Activated naive CD4-positive, alpha-beta T cell treated with anti-CD3 and anti-CD28 coated beads for 36 hours (primary cell): ENCODE measurements at regions of chr17 and their contacts with region 1.

Region 1: DNA sequence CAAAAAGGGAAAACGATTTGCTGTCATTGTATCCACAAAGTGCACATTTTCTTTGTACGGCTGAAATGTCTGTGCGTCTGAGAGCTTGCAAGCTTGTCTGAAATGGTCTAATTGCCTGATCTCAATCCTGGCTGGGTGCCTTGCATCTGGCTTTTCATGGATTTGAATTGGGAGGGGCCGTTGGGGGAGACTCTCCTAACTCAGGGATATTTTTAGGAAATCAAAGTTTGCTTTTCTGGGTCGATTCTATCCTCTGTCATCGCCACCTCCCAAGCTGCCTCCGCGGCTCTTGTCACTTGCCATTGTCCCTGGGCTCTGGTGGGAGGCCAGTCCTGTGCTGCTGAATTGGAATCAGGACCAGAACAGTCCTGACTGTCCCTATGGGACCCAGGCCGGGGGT is 33.3 kb upstream of the MGAT5B start:
- DNase-seq: no peak
- H3K4me3 Mint-ChIP-seq: no peak overlapping the region
- H3K27ac Mint-ChIP-seq: no peak overlapping the region
- H3K4me1 Mint-ChIP-seq: peaks cover 2% of the 10 kb centered on the region
- H3K27me3 Mint-ChIP-seq: peaks cover 2% of the 10 kb centered on the region

Region 2: GRCh38 chr17:76714822-76715495 is 119.9 kb before region 1 on chr17:
- CTCF ChIA-PET with region 1: no interaction called
- intact Hi-C with region 1: loop called (anchors 5 kb)
- DNase-seq: peak; percentile 90
- H3K4me3 Mint-ChIP-seq: no peak overlapping the region
- H3K27ac Mint-ChIP-seq: peak overlapping the region; percentile 82
- H3K4me1 Mint-ChIP-seq: peaks cover 32% of the 10 kb centered on the region
- H3K27me3 Mint-ChIP-seq: no peaks in the 10 kb centered on the region